Common myeloid progenitor, CD34-positive (primary cell): ENCODE measurements at regions of chr1 and their contacts with region 1.

Region 1: DNA sequence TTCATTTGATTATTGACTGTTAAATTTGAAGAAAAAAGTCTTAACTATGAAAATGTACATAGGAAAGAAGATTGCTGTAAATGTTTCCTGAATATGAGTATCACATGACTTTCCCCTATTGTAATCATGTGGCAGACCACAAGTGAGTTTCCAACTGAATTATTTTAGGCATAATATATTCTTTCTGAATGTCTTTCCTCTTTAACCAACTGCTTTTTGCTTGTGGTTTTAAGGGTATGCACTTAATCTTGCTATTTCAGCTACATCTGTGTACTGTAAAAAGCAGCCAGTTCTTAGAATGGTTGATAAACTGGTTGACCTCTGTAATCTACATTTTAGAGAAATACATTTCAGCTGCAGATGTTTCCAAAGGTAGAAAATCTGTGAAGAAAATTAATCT is 400.7 kb downstream of the NEGR1 start:
- DNase-seq: peak; percentile 70 to 96 (median 90)
- H3K4me3 ChIP-seq: peak overlapping the region in 3 of 7 experiments; percentile 8 to 33 (median 23)
- H3K27ac ChIP-seq: peak overlapping the region in 1 of 2 experiments; percentile 72
- H3K4me1 ChIP-seq: peaks cover 7 to 50% (median 23%) of the 10 kb centered on the region in 4 experiments
- H3K27me3 ChIP-seq: no peaks in the 10 kb centered on the region

Region 2: GRCh38 chr1:71843012-71843411 is 38.6 kb before region 1 on chr1:
- CTCF ChIA-PET with region 1: no interaction called
- POLR2A ChIA-PET with region 1: no interaction called
- DNase-seq: no peak
- H3K4me3 ChIP-seq: no peak overlapping the region
- H3K27ac ChIP-seq: no peak overlapping the region
- H3K4me1 ChIP-seq: peaks cover 0 to 5% (median 0%) of the 10 kb centered on the region in 4 experiments
- H3K27me3 ChIP-seq: no peaks in the 10 kb centered on the region

Region 3: GRCh38 chr1:71899881-71900280 is 18.3 kb after region 1 on chr1:
- CTCF ChIA-PET with region 1: interaction called, 13 read pairs
- POLR2A ChIA-PET with region 1: no interaction called
- DNase-seq: no peak
- H3K4me3 ChIP-seq: no peak overlapping the region
- H3K27ac ChIP-seq: no peak overlapping the region
- H3K4me1 ChIP-seq: peaks cover 0 to 2% (median 0%) of the 10 kb centered on the region in 4 experiments
- H3K27me3 ChIP-seq: no peaks in the 10 kb centered on the region